Caco-2 (cell line): ENCODE measurements at regions of chr6 and their contacts with region 1.

Region 1: DNA sequence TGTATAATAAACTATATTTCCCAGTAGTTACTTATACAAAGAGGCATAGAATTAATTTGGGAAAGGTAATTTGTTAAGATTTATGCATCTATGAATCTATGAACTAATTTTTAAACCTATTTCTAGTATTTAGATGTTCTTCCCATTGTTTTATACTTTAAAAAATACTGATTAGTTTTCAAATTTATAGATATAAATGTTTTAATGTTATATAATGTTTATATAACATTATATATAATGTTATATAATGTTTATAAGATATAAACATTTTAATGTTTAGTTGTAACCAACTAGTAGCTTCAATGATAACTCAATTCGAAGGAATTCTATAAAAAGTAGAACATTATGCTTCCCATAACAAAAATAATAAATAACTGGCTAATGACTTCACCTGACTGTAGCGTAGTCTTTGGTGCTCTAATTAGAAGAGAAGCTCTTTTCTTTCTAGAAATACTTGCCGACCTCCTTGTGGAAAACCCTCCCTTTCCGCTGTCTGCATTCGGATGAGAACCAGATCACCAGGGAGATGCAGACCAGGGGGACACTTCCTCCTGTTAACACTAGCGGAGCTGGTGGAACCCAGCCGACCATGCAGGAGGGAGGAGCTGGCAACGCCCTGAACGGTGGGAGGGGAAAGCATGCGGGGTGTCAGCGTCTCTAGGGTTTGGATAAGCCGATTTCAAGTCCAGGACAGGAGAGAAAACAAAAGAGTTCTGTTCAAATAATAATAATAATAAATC is 158.4 kb downstream of the OR2B2 start:
- DNase-seq: peak; percentile 81 to 90
- H3K4me3 ChIP-seq: peak overlapping the region; percentile 47
- H3K4me3 Mint-ChIP-seq: peak overlapping the region; percentile 74
- H3K27ac Mint-ChIP-seq: peak overlapping the region; percentile 83
- H3K4me1 ChIP-seq: no peaks in the 10 kb centered on the region
- H3K4me1 Mint-ChIP-seq: peaks cover 16% of the 10 kb centered on the region
- H3K27me3 ChIP-seq: no peaks in the 10 kb centered on the region
- H3K27me3 Mint-ChIP-seq: no peaks in the 10 kb centered on the region
- CTCF ChIP-seq: peak in 1 of 2 experiments; percentile 13

Region 2: DNA sequence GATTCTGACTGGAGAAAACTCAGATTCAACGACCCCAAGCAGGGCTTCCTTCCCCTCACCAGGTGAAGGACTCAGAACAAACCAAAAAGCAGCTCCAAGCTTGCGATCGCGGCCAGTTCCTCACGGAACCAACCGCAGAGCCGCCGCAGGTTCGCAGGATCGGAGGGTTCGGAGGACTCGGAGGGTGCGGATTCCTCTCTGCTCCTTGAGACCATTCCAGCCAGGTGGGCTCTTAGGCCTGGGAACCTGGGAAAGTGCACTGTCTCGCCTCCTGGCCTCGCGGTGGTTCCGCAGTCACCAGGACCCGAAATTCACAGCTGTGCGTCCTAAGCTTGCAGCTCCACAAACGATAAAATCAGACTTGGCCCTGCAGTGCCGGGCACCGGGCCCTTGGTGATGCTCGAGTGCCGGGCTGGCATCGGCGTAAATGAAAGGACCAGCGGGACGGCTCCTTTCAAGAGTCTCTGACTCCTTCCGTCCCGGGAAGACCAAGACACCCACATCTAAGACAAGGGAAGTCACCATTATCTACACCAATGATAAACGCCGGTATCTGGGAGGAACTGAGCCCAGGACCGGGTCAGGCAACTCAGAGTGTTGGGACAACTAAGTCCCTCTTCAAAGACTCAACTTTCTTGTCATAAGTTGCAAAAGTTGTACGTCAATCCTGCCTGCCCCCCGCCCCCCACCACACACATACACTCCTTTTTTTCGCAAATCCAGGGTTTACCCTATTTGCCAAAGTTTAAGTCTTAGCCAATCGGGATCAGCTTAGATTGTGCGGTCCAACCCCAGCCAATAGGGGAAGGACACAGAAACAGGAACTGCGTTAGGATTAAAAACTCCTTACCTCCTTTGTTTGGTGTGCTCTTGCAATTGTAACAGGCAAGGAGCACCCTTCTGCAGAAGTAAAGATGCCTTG is 576.1 kb before region 1 on chr6:
- CTCF ChIA-PET with region 1: interaction called, 15 read pairs
- POLR2A ChIA-PET with region 1: no interaction called
- intact Hi-C with region 1: no loop called
- DNase-seq: peak; percentile 85 to 86
- H3K4me3 ChIP-seq: peak overlapping the region; percentile 94
- H3K4me3 Mint-ChIP-seq: peak overlapping the region; percentile 90
- H3K27ac Mint-ChIP-seq: peak overlapping the region; percentile 91
- H3K4me1 ChIP-seq: no peaks in the 10 kb centered on the region
- H3K4me1 Mint-ChIP-seq: peaks cover 6% of the 10 kb centered on the region
- H3K27me3 ChIP-seq: no peaks in the 10 kb centered on the region
- H3K27me3 Mint-ChIP-seq: no peaks in the 10 kb centered on the region
- CTCF ChIP-seq: peak; percentile 32 to 66

Region 3: GRCh38 chr6:27617700-27618689 is 135.8 kb before region 1 on chr6:
- CTCF ChIA-PET with region 1: interaction called, 10 read pairs
- POLR2A ChIA-PET with region 1: no interaction called
- intact Hi-C with region 1: loop called (anchors 5 kb)
- DNase-seq: peak; percentile 46 to 50
- H3K4me3 ChIP-seq: peak overlapping the region; percentile 33
- H3K4me3 Mint-ChIP-seq: peak overlapping the region; percentile 86
- H3K27ac Mint-ChIP-seq: peak overlapping the region; percentile 42
- H3K4me1 ChIP-seq: no peaks in the 10 kb centered on the region
- H3K4me1 Mint-ChIP-seq: peaks cover 6% of the 10 kb centered on the region
- H3K27me3 ChIP-seq: no peaks in the 10 kb centered on the region
- H3K27me3 Mint-ChIP-seq: peaks cover 3% of the 10 kb centered on the region
- CTCF ChIP-seq: peak in 1 of 2 experiments; percentile 22

Region 4: GRCh38 chr6:27672113-27672799 is 81.6 kb before region 1 on chr6:
- CTCF ChIA-PET with region 1: interaction called, 3 read pairs
- POLR2A ChIA-PET with region 1: no interaction called
- intact Hi-C with region 1: loop called (anchors 2 kb)
- DNase-seq: peak; percentile 79 to 87
- H3K4me3 ChIP-seq: peak overlapping the region; percentile 18
- H3K4me3 Mint-ChIP-seq: peak overlapping the region; percentile 75
- H3K27ac Mint-ChIP-seq: peak overlapping the region; percentile 46
- H3K4me1 ChIP-seq: peaks cover 4% of the 10 kb centered on the region; the same call in 1 of the 2 replicates
- H3K4me1 Mint-ChIP-seq: peaks cover 30% of the 10 kb centered on the region
- H3K27me3 ChIP-seq: no peaks in the 10 kb centered on the region
- H3K27me3 Mint-ChIP-seq: no peaks in the 10 kb centered on the region
- CTCF ChIP-seq: no peak

Region 5: GRCh38 chr6:27772261-27773001 is 18.6 kb after region 1 on chr6:
- CTCF ChIA-PET with region 1: interaction called, 14 read pairs
- POLR2A ChIA-PET with region 1: interaction called, 4 read pairs
- intact Hi-C with region 1: no loop called
- DNase-seq: peak; percentile 78 to 86
- H3K4me3 ChIP-seq: peak overlapping the region; percentile 4; the same call in 1 of the 2 replicates
- H3K4me3 Mint-ChIP-seq: peak overlapping the region; percentile 59
- H3K27ac Mint-ChIP-seq: peak overlapping the region; percentile 51
- H3K4me1 ChIP-seq: peaks cover 19% of the 10 kb centered on the region
- H3K4me1 Mint-ChIP-seq: peaks cover 23% of the 10 kb centered on the region
- H3K27me3 ChIP-seq: no peaks in the 10 kb centered on the region
- H3K27me3 Mint-ChIP-seq: no peaks in the 10 kb centered on the region
- CTCF ChIP-seq: peak; percentile 76 to 90

Region 6: GRCh38 chr6:27922949-27923348 is 169.1 kb after region 1 on chr6:
- CTCF ChIA-PET with region 1: no interaction called
- POLR2A ChIA-PET with region 1: no interaction called
- intact Hi-C with region 1: no loop called
- DNase-seq: no peak
- H3K4me3 ChIP-seq: no peak overlapping the region
- H3K4me3 Mint-ChIP-seq: no peak overlapping the region
- H3K27ac Mint-ChIP-seq: no peak overlapping the region
- H3K4me1 ChIP-seq: no peaks in the 10 kb centered on the region
- H3K4me1 Mint-ChIP-seq: no peaks in the 10 kb centered on the region
- H3K27me3 ChIP-seq: no peaks in the 10 kb centered on the region
- H3K27me3 Mint-ChIP-seq: peaks cover 4% of the 10 kb centered on the region
- CTCF ChIP-seq: no peak

Region 7: DNA sequence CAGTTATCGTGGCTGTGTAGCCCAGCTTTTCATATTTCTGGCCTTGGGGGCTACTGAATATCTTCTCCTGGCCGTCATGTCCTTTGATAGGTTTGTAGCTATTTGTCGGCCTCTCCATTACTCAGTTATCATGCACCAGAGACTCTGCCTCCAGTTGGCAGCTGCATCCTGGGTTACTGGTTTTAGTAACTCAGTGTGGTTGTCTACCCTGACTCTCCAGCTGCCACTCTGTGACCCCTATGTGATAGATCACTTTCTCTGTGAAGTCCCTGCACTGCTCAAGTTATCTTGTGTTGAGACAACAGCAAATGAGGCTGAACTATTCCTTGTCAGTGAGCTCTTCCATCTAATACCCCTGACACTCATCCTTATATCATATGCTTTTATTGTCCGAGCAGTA is 203.7 kb after region 1 on chr6:
- CTCF ChIA-PET with region 1: no interaction called
- POLR2A ChIA-PET with region 1: no interaction called
- intact Hi-C with region 1: no loop called
- DNase-seq: no peak
- H3K4me3 ChIP-seq: no peak overlapping the region
- H3K4me3 Mint-ChIP-seq: no peak overlapping the region
- H3K27ac Mint-ChIP-seq: no peak overlapping the region
- H3K4me1 ChIP-seq: no peaks in the 10 kb centered on the region
- H3K4me1 Mint-ChIP-seq: no peaks in the 10 kb centered on the region
- H3K27me3 ChIP-seq: no peaks in the 10 kb centered on the region
- H3K27me3 Mint-ChIP-seq: peaks cover 2% of the 10 kb centered on the region
- CTCF ChIP-seq: no peak